ENCODE measurements at regions of chr3 and their contacts with region 1.

Region 1: GRCh38 chr3:182182531-182182968 is 470.8 kb downstream of the SOX2 start:
- DNase-seq: no peak
- H3K4me3 ChIP-seq: no peak overlapping the region
- H3K4me3 Mint-ChIP-seq: no peak overlapping the region
- H3K27ac Mint-ChIP-seq: peak overlapping the region; percentile 73
- H3K4me1 ChIP-seq: peaks cover 62% of the 10 kb centered on the region
- H3K4me1 Mint-ChIP-seq: peaks cover 58% of the 10 kb centered on the region
- H3K27me3 ChIP-seq: no peaks in the 10 kb centered on the region
- H3K27me3 Mint-ChIP-seq: no peaks in the 10 kb centered on the region
- CTCF ChIP-seq: no peak

Region 2: GRCh38 chr3:181851059-181851458 is 331.5 kb before region 1 on chr3:
- CTCF ChIA-PET with region 1: interaction called, 4 read pairs
- POLR2A ChIA-PET with region 1: no interaction called
- intact Hi-C with region 1: loop called (anchors 1 kb)
- DNase-seq: peak; percentile 61 to 69
- H3K4me3 ChIP-seq: no peak overlapping the region
- H3K4me3 Mint-ChIP-seq: peak overlapping the region; percentile 35
- H3K27ac Mint-ChIP-seq: peak overlapping the region; percentile 87
- H3K4me1 ChIP-seq: peaks cover 26% of the 10 kb centered on the region
- H3K4me1 Mint-ChIP-seq: peaks cover 22% of the 10 kb centered on the region
- H3K27me3 ChIP-seq: no peaks in the 10 kb centered on the region
- H3K27me3 Mint-ChIP-seq: no peaks in the 10 kb centered on the region
- CTCF ChIP-seq: no peak

Region 3: DNA sequence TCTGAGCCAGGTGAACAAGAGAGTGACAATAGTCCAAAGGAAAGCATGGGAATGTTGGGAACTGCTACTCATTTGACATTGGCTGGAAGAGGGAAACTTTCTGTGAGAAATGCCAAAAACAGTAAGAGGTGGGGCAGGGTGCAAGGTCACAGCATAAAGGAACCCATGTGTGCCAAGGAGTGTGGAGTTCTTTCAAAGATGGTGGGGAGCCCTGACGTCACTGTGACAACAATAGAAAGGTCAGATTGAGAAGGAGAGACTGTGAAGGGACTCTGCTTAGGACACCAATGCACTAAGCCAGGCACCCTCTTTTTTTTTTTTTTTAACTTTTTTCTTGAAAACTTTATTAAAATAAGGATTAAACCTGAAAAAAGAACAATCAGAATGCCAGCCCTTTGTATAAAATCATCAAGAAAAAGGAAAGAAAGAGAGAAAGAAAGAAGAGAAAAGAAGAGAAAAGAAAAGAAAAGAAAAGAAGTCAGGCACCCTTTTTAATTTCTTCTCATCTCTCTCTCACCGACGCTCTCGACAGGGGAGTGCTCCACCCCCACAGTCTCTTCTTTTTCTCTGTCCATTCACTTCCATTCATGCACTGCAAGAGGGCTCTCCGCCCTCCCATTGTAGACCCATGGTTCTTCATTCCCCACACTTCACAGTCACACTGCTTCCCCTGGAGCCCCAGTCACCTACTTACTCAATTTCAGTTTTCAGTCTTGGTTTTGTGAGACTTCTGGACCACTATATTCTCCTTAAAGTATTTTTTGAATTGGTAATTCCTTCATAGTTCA is 216.4 kb before region 1 on chr3:
- CTCF ChIA-PET with region 1: interaction called, 3 read pairs
- POLR2A ChIA-PET with region 1: no interaction called
- intact Hi-C with region 1: loop called (anchors 1 kb)
- DNase-seq: no peak
- H3K4me3 ChIP-seq: no peak overlapping the region
- H3K4me3 Mint-ChIP-seq: no peak overlapping the region
- H3K27ac Mint-ChIP-seq: no peak overlapping the region
- H3K4me1 ChIP-seq: peaks cover 11% of the 10 kb centered on the region; the same call in 1 of the 2 replicates
- H3K4me1 Mint-ChIP-seq: peaks cover 13% of the 10 kb centered on the region
- H3K27me3 ChIP-seq: no peaks in the 10 kb centered on the region
- H3K27me3 Mint-ChIP-seq: no peaks in the 10 kb centered on the region
- CTCF ChIP-seq: no peak

Region 4: GRCh38 chr3:182165235-182165784 is 17.2 kb before region 1 on chr3:
- CTCF ChIA-PET with region 1: no interaction called
- POLR2A ChIA-PET with region 1: no interaction called
- intact Hi-C with region 1: loop called (anchors 1 kb)
- DNase-seq: peak; percentile 73 to 83
- H3K4me3 ChIP-seq: no peak overlapping the region
- H3K4me3 Mint-ChIP-seq: peak overlapping the region; percentile 36
- H3K27ac Mint-ChIP-seq: peak overlapping the region; percentile 84
- H3K4me1 ChIP-seq: peaks cover 13% of the 10 kb centered on the region
- H3K4me1 Mint-ChIP-seq: peaks cover 14% of the 10 kb centered on the region
- H3K27me3 ChIP-seq: no peaks in the 10 kb centered on the region
- H3K27me3 Mint-ChIP-seq: no peaks in the 10 kb centered on the region
- CTCF ChIP-seq: no peak

Measured in Caco-2 (cell line).